ENCODE measurements at regions of chr14 and their contacts with region 1.

Region 1: GRCh38 chr14:95117937-95118721 is 39.2 kb downstream of the DICER1 start:
- DNase-seq: no peak

Region 2: DNA sequence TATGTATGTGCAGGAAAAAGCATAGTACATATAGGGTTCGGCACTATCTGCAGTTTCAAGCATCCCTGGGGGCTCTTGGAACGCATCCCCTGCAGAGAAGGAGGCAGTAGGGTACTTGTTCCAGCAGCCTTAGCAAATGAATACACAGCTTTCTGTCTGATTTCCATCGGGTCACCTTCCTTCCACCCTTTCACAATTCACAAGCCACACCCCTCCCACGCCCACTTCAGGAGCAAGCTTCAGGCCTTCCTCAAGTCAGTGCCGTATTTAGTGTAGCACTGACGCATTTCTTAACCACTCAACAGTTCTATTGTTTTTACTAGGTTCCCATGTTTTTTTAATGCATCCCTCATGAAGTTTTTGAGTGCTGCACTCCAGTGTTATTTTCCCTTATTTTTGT is 137.4 kb after region 1 on chr14:
- intact Hi-C with region 1: no loop called
- DNase-seq: no peak

Region 3: GRCh38 chr14:95307402-95308062 is 189.4 kb after region 1 on chr14:
- intact Hi-C with region 1: loop called (anchors 10 kb)
- DNase-seq: peak in 2 of 10 donors; percentile 53 to 89

Region 4: GRCh38 chr14:95431199-95432143 is 313.3 kb after region 1 on chr14:
- intact Hi-C with region 1: loop called (anchors 10 kb)
- DNase-seq: peak in 2 of 10 donors; percentile 63 to 67

Measured in posterior cingulate gyrus (tissue), 11 donors.